ENCODE measurements at regions of chr17 and their contacts with region 1.

Region 1: DNA sequence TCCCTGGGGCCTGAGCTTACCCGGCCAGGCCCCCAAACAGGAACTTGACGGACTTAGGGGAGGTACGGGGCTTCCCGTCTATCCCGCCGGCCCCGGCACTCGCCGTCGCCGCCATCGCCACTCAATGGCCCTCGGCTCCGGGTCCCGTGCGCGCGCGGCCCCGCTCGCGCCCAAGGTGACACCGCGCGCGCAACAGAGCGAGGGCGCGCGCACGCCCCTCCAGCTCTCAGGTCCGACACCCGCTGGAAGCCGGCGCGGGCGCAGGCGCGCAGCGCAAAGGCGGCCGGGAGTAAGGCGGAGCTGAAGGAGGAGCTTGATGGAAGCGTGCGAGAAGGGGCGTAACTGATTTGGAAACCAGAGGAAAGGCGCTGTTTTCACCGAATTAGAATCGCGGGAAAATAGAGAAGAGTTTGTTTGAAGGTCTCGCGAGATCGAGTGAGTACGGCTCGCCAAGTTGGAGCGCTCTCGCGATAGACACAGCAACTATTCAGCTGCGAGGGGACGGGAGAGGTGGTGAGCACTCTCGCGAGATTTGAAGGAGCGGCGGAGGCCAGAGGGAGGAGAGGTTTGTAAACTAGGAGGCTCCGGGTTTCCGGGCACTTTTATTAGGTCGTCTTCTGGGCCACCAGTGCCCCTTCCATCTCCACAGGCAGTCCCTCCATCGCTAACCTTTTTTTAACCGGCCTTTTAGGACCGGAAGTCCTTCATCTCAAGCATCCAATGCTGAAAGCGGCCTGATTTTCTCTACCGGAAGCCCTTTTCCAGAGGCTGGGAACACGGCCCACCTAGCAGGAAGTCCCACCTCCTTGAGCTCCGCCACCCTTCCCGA is at the starts of genes RNF167 and SLC25A11:
- DNase-seq: peak; percentile 94 to 98
- ATAC-seq: peak; percentile 87 to 90
- H3K4me3 ChIP-seq: peak within 1 kb of the TSS; percentile 91 to 98 (median 92)
- H3K27ac ChIP-seq: peak within 1 kb of the TSS; percentile 94 to 97 (median 94)
- H3K4me1 ChIP-seq: peaks cover 43 to 48% of the 10 kb centered on the region in 2 donors
- H3K27me3 ChIP-seq: no peaks in the 10 kb centered on the region
- CTCF ChIP-seq: peak in 1 of 5 experiments; percentile 30
- POLR2A ChIP-seq: peak; percentile 83 to 89
- total RNA-seq, gene RNF167: 51.2 to 99.5 (median 75.2) TPM
- total RNA-seq, gene SLC25A11: 52.6 to 106 (median 81.7) TPM

Region 2: DNA sequence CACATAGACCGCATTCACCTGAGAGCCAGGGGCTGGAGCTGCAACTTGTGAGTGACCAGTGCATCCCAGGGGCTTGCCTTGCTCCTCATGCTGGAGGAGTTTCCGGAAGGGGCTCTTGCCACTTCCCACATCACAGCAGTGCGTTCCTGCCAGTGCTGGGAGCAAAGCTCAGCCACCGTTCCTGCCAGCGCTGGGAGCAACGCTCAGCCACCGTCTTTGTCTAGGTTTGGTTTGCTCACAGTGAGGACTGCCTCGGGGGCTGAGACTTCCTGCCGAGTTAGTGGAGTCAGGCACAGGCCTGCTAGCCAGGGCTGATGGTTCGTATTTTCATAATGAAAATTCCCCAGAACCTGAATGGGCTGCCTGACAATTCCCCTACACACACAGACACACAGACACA is 31.7 kb before region 1 on chr17:
- in situ Hi-C with region 1: no loop called
- intact Hi-C with region 1: loop called (anchors 2 kb)
- DNase-seq: no peak
- ATAC-seq: no peak
- H3K4me3 ChIP-seq: no peak overlapping the region
- H3K27ac ChIP-seq: peak overlapping the region; percentile 50 to 77 (median 76)
- H3K4me1 ChIP-seq: peaks cover 13 to 14% of the 10 kb centered on the region in 2 donors
- H3K27me3 ChIP-seq: no peaks in the 10 kb centered on the region
- CTCF ChIP-seq: no peak
- POLR2A ChIP-seq: no peak

Region 3: DNA sequence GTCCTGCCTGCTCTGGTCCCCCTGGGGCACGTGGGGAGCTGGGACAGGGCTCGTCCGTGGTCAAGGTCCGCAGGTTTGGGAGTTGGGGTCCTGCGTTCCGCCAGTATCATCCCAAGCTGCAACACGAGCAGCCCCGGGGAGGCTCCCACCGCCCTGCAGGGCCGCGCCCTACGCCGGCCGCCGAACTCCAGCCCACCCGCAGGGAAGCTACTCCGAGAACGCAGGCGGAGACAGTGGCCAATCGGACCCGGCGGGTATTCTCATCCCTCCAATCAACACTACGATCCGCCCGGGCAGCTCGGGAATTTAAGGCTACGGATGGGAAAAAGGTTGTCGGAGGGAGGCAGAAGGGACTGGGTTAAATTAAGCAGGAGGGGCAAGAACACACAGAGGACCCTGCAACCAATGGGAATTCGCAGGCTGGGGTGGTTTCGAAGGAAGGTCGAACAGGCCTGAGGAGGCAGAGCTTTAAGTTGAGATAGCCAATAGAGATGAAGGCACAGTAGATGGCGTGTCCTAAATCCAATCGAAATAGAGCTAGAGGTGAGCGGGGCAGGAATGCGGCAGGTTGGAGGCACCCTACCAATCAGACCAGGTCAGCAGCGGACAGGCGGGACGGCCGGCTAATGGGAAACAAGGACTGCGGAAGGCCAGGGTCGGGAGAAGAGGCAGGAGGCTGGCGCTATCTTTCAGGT is 27.0 kb after region 1 on chr17:
- in situ Hi-C with region 1: no loop called
- intact Hi-C with region 1: loop called (anchors 2 kb)
- DNase-seq: peak; percentile 100
- ATAC-seq: peak; percentile 85 to 90
- H3K4me3 ChIP-seq: peak overlapping the region; percentile 70 to 87 (median 75)
- H3K27ac ChIP-seq: peak overlapping the region; percentile 88 to 95 (median 94)
- H3K4me1 ChIP-seq: peaks cover 27 to 34% of the 10 kb centered on the region in 2 donors
- H3K27me3 ChIP-seq: no peaks in the 10 kb centered on the region
- CTCF ChIP-seq: peak in 1 of 5 experiments; percentile 3
- POLR2A ChIP-seq: peak; percentile 47 to 68

Region 4: GRCh38 chr17:4980644-4981216 is 40.7 kb after region 1 on chr17:
- in situ Hi-C with region 1: loop called in 1 of 4 experiments (anchors 5 kb)
- intact Hi-C with region 1: no loop called
- DNase-seq: no peak
- ATAC-seq: peak; percentile 65 to 67
- H3K4me3 ChIP-seq: no peak overlapping the region
- H3K27ac ChIP-seq: peak overlapping the region in 1 of 4 donors; percentile 43
- H3K4me1 ChIP-seq: peaks cover 5% of the 10 kb centered on the region in 2 donors
- H3K27me3 ChIP-seq: no peaks in the 10 kb centered on the region
- CTCF ChIP-seq: peak; percentile 75 to 88 (median 85)
- POLR2A ChIP-seq: no peak

Region 5: DNA sequence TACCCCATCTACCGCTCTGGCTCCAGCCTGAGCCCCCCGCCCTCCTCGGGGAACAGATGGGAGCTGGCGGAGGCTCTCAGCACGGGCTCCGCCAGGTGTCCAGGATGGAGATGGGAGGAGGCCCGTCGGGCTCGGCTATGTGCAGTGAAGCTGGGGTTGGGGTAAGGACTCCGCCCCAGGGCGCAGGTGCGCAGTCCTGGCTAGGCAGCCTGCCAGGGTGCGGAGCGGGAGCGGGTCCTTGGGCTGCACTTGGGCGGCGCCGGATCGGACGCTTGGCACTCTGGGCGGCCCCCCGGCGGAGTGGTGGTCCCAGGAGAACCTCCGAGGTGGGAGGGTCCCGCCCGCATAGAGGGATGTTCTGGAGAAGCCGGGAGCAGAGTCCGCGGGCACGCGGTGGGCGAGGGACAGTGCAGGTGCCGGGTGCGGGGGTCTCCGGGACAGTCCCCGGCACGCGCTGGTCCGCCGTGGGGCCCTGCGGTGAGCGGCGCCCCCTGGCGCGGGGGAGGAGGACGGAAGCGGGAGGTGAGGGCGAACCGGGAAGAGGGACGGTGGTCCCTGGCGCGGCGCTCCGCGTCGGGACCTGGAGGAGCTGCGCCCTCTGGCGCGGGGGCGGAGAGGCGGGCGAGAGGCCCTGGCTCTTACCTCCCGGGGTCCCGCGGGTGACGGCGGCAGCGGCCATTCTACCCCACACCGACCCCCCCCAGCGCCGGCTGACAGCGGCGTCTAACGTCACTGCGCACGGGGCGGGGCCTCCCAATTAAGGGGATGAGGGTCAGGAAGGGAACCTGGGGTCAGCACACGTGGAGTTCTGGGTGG is 47.1 kb after region 1 on chr17 and contains the start of gene CAMTA2:
- in situ Hi-C with region 1: loop called in 1 of 4 experiments (anchors 5 kb)
- intact Hi-C with region 1: loop called (anchors 2 kb)
- DNase-seq: peak; percentile 84 to 90
- ATAC-seq: peak; percentile 92
- H3K4me3 ChIP-seq: peak within 1 kb of the TSS; percentile 76 to 100 (median 94)
- H3K27ac ChIP-seq: peak within 1 kb of the TSS; percentile 88 to 98 (median 96)
- H3K4me1 ChIP-seq: peaks cover 17 to 20% of the 10 kb centered on the region in 2 donors
- H3K27me3 ChIP-seq: no peaks in the 10 kb centered on the region
- CTCF ChIP-seq: peak; percentile 80 to 96 (median 94)
- POLR2A ChIP-seq: peak; percentile 89 to 91
- total RNA-seq, gene CAMTA2: 19.1 to 46.4 (median 36.4) TPM

Region 6: GRCh38 chr17:4997302-4998026 is 57.5 kb after region 1 on chr17 and contains the starts of genes INCA1 and KIF1C:
- in situ Hi-C with region 1: no loop called
- intact Hi-C with region 1: loop called (anchors 2 kb)
- DNase-seq: peak; percentile 93 to 94
- ATAC-seq: peak; percentile 62 to 68
- H3K4me3 ChIP-seq: peak within 1 kb of the TSS; percentile 80 to 99 (median 96)
- H3K27ac ChIP-seq: peak within 1 kb of the TSS; percentile 98 to 99 (median 99)
- H3K4me1 ChIP-seq: peaks cover 38 to 40% of the 10 kb centered on the region in 2 donors
- H3K27me3 ChIP-seq: no peaks in the 10 kb centered on the region
- CTCF ChIP-seq: peak in 2 of 5 experiments; percentile 37 to 47
- POLR2A ChIP-seq: peak; percentile 86 to 88
- total RNA-seq, gene INCA1: 1.9 to 5.7 (median 4.3) TPM
- total RNA-seq, gene KIF1C: 327 to 543 (median 393) TPM

Region 7: GRCh38 chr17:5092139-5093010 is 152.4 kb after region 1 on chr17:
- in situ Hi-C with region 1: no loop called
- intact Hi-C with region 1: no loop called
- DNase-seq: no peak
- ATAC-seq: no peak
- H3K4me3 ChIP-seq: peak overlapping the region in 1 of 4 donors; percentile 12
- H3K27ac ChIP-seq: no peak overlapping the region
- H3K4me1 ChIP-seq: peaks cover 0 to 3% of the 10 kb centered on the region in 2 donors
- H3K27me3 ChIP-seq: no peaks in the 10 kb centered on the region
- CTCF ChIP-seq: no peak
- POLR2A ChIP-seq: no peak

Measured in gastrocnemius medialis (tissue), 4 donors.